ENCODE measurements at regions of chr7 and their contacts with region 1.

Region 1: DNA sequence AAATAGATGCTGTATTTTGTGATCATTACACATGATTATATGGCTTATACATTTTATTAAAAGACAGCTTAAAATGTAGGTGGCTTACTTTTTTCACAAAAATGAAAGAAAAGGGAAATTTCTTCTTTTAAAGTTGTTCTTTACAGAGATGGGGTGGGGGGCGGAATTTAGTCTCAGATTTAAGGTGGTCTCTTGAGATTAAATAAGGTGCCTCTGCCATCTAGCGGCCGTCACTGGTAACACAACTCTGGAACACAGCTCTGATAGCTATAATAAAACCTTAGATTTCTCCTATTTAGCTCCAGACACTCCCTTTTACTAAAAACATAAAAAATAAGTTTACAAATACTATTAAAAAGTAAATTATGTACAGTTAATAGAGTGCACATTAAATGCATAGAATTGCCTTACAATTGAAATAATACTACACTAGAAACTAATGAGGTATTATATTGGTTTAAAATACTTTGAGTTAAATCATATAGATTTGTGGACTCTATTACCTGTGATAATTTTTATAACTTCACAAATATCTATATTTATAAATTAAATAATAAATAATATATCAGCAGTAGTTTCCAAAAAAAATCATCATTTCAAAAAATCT is 210.9 kb downstream of the DGKB start:
- DNase-seq: peak; percentile 73
- ATAC-seq: no peak

Region 2: DNA sequence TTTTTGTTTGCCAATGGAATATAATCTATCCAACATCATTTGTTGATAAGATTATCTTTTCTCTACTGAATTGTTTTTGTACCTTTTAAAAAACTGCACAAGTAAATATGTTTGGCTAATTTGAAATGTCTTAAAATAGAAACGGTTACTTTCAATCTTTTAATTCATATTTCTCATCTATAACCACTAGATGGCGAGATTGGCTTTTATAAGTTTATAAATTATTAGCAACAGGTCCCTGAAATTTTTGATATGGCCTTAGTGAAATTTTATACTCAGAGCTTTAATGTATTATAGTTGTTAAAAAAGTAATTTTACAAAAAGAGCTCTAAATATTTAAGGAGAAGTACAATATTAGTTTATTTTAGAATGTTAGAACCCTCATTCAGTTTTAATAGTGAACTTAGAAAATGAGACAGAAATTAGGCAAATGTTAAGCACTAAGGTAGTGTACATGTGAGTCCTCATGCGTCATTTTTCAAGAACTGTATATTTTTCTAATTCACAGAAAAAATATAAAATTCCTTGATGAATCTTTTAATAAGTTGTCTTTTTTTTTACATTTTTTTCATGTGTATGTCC is 1411.8 kb before region 1 on chr7:
- intact Hi-C with region 1: loop called (anchors 2 kb)
- DNase-seq: no peak
- ATAC-seq: no peak

Measured in sciatic nerve (tissue), 2 donors.